ENCODE measurements at regions of chr6 and their contacts with region 1.

Region 1: GRCh38 chr6:7238900-7239589 is 74.0 kb downstream of the SSR1 start:
- DNase-seq: peak; percentile 53
- H3K4me3 Mint-ChIP-seq: no peak overlapping the region
- H3K27ac Mint-ChIP-seq: no peak overlapping the region
- H3K4me1 Mint-ChIP-seq: peaks cover 9% of the 10 kb centered on the region
- H3K27me3 Mint-ChIP-seq: no peaks in the 10 kb centered on the region

Region 2: GRCh38 chr6:6659600-6660327 is 579.3 kb before region 1 on chr6:
- intact Hi-C with region 1: no loop called
- DNase-seq: no peak
- H3K4me3 Mint-ChIP-seq: no peak overlapping the region
- H3K27ac Mint-ChIP-seq: peak overlapping the region; percentile 89
- H3K4me1 Mint-ChIP-seq: peaks cover 84% of the 10 kb centered on the region
- H3K27me3 Mint-ChIP-seq: no peaks in the 10 kb centered on the region

Region 3: DNA sequence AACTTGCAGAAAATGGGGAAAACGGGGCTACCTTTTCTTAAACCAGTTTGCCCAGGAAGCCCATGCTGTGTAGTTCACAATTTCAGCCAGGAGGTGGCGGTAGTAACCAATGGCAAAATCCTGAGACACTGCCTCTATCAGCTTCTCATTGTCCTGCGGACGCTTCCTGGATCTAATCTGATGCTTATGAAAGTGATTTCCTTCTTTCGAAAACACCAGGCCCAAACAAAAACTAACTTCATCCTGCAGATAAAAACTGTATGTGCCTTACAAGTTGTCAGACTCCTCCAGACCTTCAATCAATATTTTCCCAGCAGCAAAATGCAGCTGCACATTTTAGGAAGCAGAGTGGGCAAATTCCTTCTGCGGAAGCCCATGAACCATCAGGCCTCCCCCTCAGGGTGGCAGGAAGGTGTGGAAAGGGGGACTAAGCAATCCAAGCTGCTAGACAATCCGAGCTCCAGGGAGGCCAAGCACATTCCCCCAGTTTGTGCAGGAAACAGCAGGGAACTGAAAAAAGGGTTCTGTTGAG is 562.1 kb before region 1 on chr6:
- intact Hi-C with region 1: loop called (anchors 1 kb)
- DNase-seq: peak; percentile 70
- H3K4me3 Mint-ChIP-seq: no peak overlapping the region
- H3K27ac Mint-ChIP-seq: no peak overlapping the region
- H3K4me1 Mint-ChIP-seq: peaks cover 24% of the 10 kb centered on the region
- H3K27me3 Mint-ChIP-seq: no peaks in the 10 kb centered on the region

Region 4: GRCh38 chr6:6724539-6725467 is 514.2 kb before region 1 on chr6:
- intact Hi-C with region 1: loop called (anchors 1 kb)
- DNase-seq: peak; percentile 33
- H3K4me3 Mint-ChIP-seq: no peak overlapping the region
- H3K27ac Mint-ChIP-seq: no peak overlapping the region
- H3K4me1 Mint-ChIP-seq: peaks cover 15% of the 10 kb centered on the region
- H3K27me3 Mint-ChIP-seq: peaks cover 18% of the 10 kb centered on the region

Region 5: DNA sequence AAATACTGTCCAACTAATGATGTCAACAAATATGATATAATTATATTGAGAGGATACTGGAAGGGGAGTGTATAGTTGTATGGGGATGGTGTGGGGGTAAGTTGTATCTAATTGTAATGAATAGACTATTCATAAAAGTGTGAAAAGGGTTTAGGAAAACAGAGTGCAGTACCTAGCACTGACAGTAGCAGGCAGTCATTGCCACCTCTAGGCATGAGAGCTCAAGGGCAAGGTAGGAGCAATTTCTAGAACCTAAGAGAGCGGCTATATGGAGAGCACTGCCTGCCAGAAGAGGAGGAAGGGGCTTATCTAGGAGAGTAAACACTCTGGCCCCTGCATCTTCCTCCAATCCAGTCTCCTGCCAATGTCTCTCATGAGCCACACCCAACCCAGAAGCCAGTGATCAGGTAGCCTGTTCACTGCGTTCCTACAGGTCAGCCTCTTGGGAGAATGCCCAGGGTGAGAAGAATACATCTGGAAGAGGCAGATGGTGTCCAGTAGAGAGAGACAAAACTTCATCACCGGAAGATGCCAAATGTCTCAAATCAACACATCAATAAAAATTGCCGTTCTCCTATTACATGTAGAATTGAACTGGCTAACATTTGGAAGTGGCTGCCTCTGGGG is 450.5 kb before region 1 on chr6:
- intact Hi-C with region 1: loop called (anchors 1 kb)
- DNase-seq: no peak
- H3K4me3 Mint-ChIP-seq: no peak overlapping the region
- H3K27ac Mint-ChIP-seq: no peak overlapping the region
- H3K4me1 Mint-ChIP-seq: peaks cover 21% of the 10 kb centered on the region
- H3K27me3 Mint-ChIP-seq: peaks cover 21% of the 10 kb centered on the region

Region 6: GRCh38 chr6:7073821-7074525 is 165.1 kb before region 1 on chr6:
- intact Hi-C with region 1: loop called (anchors 5 kb)
- DNase-seq: peak; percentile 55
- H3K4me3 Mint-ChIP-seq: no peak overlapping the region
- H3K27ac Mint-ChIP-seq: peak overlapping the region; percentile 74
- H3K4me1 Mint-ChIP-seq: peaks cover 13% of the 10 kb centered on the region
- H3K27me3 Mint-ChIP-seq: peaks cover 70% of the 10 kb centered on the region

Region 7: DNA sequence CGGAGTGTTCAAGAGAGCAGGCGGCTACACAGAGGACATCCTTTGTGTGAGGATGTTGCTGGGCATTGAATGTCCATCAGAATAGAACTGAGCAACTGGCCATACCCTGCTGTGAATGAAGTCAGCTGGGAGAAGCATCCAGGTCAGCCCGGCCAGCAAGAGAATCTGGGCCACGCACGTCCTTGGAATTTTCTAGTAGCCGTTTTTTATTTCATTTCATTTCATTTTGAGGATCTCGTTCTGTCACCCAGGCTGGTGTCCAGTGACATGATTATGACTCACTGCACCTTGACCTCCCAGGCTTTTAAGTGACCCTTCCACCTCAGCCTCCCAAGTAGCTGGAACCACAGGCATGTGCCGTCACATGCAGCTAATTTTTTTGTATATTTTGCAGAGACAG is 23.9 kb before region 1 on chr6:
- intact Hi-C with region 1: no loop called
- DNase-seq: no peak
- H3K4me3 Mint-ChIP-seq: no peak overlapping the region
- H3K27ac Mint-ChIP-seq: no peak overlapping the region
- H3K4me1 Mint-ChIP-seq: peaks cover 4% of the 10 kb centered on the region
- H3K27me3 Mint-ChIP-seq: no peaks in the 10 kb centered on the region

Region 8: DNA sequence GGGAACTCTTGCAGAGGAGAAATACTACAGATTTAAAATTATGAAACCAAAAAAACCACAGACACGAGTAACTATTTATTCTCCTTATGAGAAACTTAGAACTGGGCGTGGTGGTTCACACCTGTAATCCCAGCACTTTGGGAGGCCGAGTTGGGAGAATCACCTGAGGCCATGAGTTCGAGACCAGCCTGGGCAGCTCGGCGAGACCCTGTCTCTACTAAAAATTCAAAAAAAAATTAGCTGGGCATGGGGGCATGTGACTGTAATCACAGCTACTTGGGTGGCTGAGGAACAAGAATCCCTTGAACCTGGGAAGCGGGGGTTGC is 37.1 kb after region 1 on chr6:
- intact Hi-C with region 1: no loop called
- DNase-seq: no peak
- H3K4me3 Mint-ChIP-seq: no peak overlapping the region
- H3K27ac Mint-ChIP-seq: no peak overlapping the region
- H3K4me1 Mint-ChIP-seq: peaks cover 2% of the 10 kb centered on the region
- H3K27me3 Mint-ChIP-seq: no peaks in the 10 kb centered on the region

Measured in activated T-helper 1 cell treated with anti-CD3 and anti-CD28 coated beads, Interleukin-12 subunit alpha, Interleukin-12 subunit beta, Interleukin-2, Interleukin-4 antibody, amounts not matched to agents 30 ng/mL and 10 ng/mL and 1 ng/mL, durations not matched to agents 14 hours and 24 hours and 36 hours (primary cell).